CD8-positive, alpha-beta T cell (primary cell): ENCODE measurements at regions of chr3 and their contacts with region 1.

Region 1: DNA sequence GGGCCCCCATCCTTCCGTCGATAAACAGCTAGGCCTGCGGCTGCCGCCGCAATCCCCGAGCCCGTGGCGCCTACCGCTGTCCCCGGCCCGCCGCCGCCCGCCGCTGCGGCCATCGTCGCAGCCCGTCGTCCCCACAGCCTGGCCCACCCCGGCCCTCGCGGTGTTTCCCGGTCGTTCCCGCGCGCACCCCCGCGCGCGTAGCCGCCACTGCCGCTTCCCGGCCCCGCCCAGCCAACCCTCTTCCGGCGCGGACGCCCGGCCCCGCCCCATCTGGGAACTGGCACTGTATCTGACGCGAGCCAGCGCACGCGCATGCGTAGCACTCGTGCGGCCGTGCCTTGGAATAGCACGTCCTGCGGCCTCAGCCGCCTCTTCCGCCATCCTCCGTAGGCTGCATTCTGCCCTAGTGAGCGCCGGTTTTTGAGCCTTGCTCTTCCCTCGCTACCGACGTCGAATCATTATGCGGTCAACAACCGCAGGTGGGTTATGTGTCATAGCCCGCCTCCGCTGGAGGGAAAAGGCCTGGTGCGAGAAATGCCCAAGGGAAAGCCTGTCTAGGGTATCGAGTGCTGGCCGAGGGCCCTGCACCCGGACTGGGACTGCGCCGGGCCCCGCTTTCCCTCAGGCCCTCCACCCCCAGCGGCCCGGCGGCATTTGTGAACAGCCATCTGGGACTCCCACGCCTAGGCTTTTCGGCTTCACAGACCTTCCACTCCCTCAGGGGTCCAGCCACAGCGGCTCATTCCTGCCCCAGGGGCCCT is at the start of gene SMARCC1:
- DNase-seq: peak; percentile 91 to 99 (median 97)
- ATAC-seq: peak; percentile 87
- H3K4me3 ChIP-seq: peak within 1 kb of the TSS; percentile 54 to 91
- H3K4me3 Mint-ChIP-seq: peak within 1 kb of the TSS; percentile 89
- H3K27ac ChIP-seq: peak within 1 kb of the TSS; percentile 87 to 98
- H3K27ac Mint-ChIP-seq: peak within 1 kb of the TSS; percentile 97
- H3K4me1 ChIP-seq: peaks cover 23% of the 10 kb centered on the region
- H3K4me1 Mint-ChIP-seq: peaks cover 31% of the 10 kb centered on the region
- H3K27me3 ChIP-seq: no peaks in the 10 kb centered on the region
- H3K27me3 Mint-ChIP-seq: no peaks in the 10 kb centered on the region
- CTCF ChIP-seq: no peak
- total RNA-seq, gene SMARCC1: 65.4 to 68.2 TPM

Region 2: DNA sequence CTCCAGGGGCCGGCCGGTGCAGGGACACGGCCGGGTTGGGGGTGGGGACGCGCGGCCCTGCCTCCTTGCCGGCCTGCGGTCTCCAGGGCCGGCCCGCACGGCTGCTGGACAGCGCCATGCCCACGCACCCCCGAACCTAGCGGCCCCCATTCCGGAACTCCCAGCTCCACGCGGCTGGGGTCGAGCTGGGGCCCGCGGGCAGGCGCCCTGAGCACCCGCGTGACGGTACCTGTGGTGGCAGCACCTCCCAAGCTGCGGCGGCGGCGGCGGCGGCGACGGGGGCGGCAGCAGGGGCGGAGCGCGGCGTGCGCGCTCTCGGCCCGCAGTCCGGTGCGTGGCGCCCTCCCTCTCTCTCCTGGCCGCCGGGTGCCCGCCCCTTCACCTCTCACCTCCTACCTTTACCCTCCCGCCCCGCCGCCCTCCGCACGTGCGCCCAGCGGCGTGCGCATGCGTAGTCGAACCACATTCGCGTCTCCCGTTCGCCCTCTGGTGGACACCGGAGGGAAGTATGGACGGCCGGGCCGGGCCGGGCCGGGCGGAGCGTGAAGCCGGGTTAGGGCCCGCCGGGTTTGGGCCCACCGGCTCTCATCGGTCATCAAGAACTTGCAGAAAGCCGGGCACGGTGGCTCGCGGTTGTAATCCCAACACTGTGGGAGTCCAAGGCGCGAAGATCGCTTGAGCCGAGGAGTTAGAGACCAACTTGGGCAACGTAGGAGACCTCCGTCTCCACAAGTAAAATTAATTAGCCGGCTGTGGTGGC is 306.1 kb before region 1 on chr3 and contains the start of gene SCAP:
- CTCF ChIA-PET with region 1: no interaction called
- POLR2A ChIA-PET with region 1: interaction called, 4 read pairs
- intact Hi-C with region 1: loop called in 1 of 2 experiments (anchors 2 kb)
- DNase-seq: peak; percentile 90 to 98 (median 96)
- ATAC-seq: peak; percentile 90
- H3K4me3 ChIP-seq: peak within 1 kb of the TSS; percentile 58 to 83
- H3K4me3 Mint-ChIP-seq: peak within 1 kb of the TSS; percentile 93
- H3K27ac ChIP-seq: peak within 1 kb of the TSS; percentile 69 to 86
- H3K27ac Mint-ChIP-seq: peak within 1 kb of the TSS; percentile 94
- H3K4me1 ChIP-seq: peaks cover 28% of the 10 kb centered on the region
- H3K4me1 Mint-ChIP-seq: peaks cover 43% of the 10 kb centered on the region
- H3K27me3 ChIP-seq: no peaks in the 10 kb centered on the region
- H3K27me3 Mint-ChIP-seq: no peaks in the 10 kb centered on the region
- CTCF ChIP-seq: peak; percentile 97
- total RNA-seq, gene SCAP: 72.8 to 76.6 TPM

Region 3: DNA sequence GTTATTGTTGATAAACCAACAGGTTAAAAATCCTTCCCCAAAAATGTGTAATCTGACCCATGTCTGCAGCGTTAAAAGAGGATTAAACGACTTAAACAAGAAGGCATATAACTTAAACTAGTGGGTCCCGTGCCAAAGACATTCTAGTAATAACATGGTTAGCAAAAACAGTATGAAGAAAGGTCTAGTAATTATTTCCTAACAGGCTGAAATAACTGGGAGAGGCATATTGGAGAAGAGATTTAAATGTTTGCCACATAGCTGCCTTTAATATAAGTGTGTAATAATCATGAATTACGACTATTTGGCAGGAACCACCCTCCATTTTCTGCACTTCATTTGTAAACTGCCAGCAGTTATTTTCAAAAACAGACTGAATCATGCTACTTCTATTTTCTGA is 135.5 kb before region 1 on chr3:
- CTCF ChIA-PET with region 1: no interaction called
- POLR2A ChIA-PET with region 1: no interaction called
- intact Hi-C with region 1: no loop called
- DNase-seq: no peak
- ATAC-seq: no peak
- H3K4me3 ChIP-seq: no peak overlapping the region
- H3K4me3 Mint-ChIP-seq: no peak overlapping the region
- H3K27ac ChIP-seq: no peak overlapping the region
- H3K27ac Mint-ChIP-seq: no peak overlapping the region
- H3K4me1 ChIP-seq: no peaks in the 10 kb centered on the region
- H3K4me1 Mint-ChIP-seq: peaks cover 2% of the 10 kb centered on the region
- H3K27me3 ChIP-seq: no peaks in the 10 kb centered on the region
- H3K27me3 Mint-ChIP-seq: no peaks in the 10 kb centered on the region
- CTCF ChIP-seq: no peak

Region 4: DNA sequence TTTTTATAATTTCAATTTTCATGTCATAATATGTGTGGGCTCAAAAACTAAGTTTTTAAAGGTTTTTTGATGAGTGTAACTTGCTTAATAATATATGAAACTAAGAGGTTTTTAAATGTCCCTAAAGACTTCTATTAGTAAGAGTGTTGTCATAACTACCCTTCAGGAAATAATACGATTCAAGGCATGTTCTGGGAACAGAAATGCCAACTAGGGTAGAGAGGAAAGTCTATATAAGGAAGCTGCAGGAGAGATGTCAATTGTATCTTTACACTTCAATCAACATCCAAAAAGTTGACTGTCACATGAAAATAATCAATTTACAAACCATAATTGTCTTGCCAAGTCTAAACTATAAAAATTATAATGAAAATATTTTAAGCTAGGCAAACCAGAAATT is 76.5 kb before region 1 on chr3:
- CTCF ChIA-PET with region 1: no interaction called
- POLR2A ChIA-PET with region 1: no interaction called
- intact Hi-C with region 1: loop called in 1 of 2 experiments (anchors 5 kb)
- DNase-seq: no peak
- ATAC-seq: no peak
- H3K4me3 ChIP-seq: no peak overlapping the region
- H3K4me3 Mint-ChIP-seq: no peak overlapping the region
- H3K27ac ChIP-seq: no peak overlapping the region
- H3K27ac Mint-ChIP-seq: no peak overlapping the region
- H3K4me1 ChIP-seq: no peaks in the 10 kb centered on the region
- H3K4me1 Mint-ChIP-seq: no peaks in the 10 kb centered on the region
- H3K27me3 ChIP-seq: no peaks in the 10 kb centered on the region
- H3K27me3 Mint-ChIP-seq: no peaks in the 10 kb centered on the region
- CTCF ChIP-seq: no peak

Region 5: GRCh38 chr3:47722859-47723258 is 59.0 kb before region 1 on chr3:
- CTCF ChIA-PET with region 1: no interaction called
- POLR2A ChIA-PET with region 1: no interaction called
- intact Hi-C with region 1: loop called in 1 of 2 experiments (anchors 5 kb)
- DNase-seq: no peak
- ATAC-seq: no peak
- H3K4me3 ChIP-seq: no peak overlapping the region
- H3K4me3 Mint-ChIP-seq: no peak overlapping the region
- H3K27ac ChIP-seq: no peak overlapping the region
- H3K27ac Mint-ChIP-seq: peak overlapping the region; percentile 29
- H3K4me1 ChIP-seq: no peaks in the 10 kb centered on the region
- H3K4me1 Mint-ChIP-seq: peaks cover 4% of the 10 kb centered on the region
- H3K27me3 ChIP-seq: no peaks in the 10 kb centered on the region
- H3K27me3 Mint-ChIP-seq: no peaks in the 10 kb centered on the region
- CTCF ChIP-seq: no peak

Region 6: DNA sequence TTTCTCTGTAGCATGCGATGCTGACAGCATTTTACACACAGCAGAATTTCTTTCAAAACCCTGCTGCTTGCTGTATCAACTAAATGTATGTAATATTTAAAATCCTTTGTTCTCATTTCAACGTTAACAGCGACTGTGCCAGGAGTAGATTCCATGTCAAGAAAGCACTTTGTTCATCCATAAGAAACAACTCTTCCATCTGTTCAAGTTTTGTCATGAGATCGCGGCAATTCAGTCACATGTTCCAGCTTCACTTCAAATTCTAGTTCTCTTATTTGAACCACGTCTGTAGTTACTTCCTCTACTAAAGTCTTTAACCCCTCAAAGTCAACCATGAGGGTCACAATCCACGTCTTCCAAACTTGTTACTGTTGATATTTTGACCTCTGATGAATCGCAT is 50.8 kb before region 1 on chr3:
- CTCF ChIA-PET with region 1: interaction called, 3 read pairs
- POLR2A ChIA-PET with region 1: no interaction called
- intact Hi-C with region 1: loop called in 1 of 2 experiments (anchors 10 kb)
- DNase-seq: no peak
- ATAC-seq: no peak
- H3K4me3 ChIP-seq: no peak overlapping the region
- H3K4me3 Mint-ChIP-seq: no peak overlapping the region
- H3K27ac ChIP-seq: no peak overlapping the region
- H3K27ac Mint-ChIP-seq: no peak overlapping the region
- H3K4me1 ChIP-seq: no peaks in the 10 kb centered on the region
- H3K4me1 Mint-ChIP-seq: no peaks in the 10 kb centered on the region
- H3K27me3 ChIP-seq: no peaks in the 10 kb centered on the region
- H3K27me3 Mint-ChIP-seq: no peaks in the 10 kb centered on the region
- CTCF ChIP-seq: no peak

Region 7: GRCh38 chr3:48088749-48089466 is 307.0 kb after region 1 on chr3:
- CTCF ChIA-PET with region 1: no interaction called
- POLR2A ChIA-PET with region 1: no interaction called
- intact Hi-C with region 1: loop called in 1 of 2 experiments (anchors 5 kb)
- DNase-seq: peak; percentile 89 to 97 (median 94)
- ATAC-seq: peak; percentile 91
- H3K4me3 ChIP-seq: peak overlapping the region; percentile 80 to 100
- H3K4me3 Mint-ChIP-seq: peak overlapping the region; percentile 96
- H3K27ac ChIP-seq: peak overlapping the region; percentile 86 to 95
- H3K27ac Mint-ChIP-seq: peak overlapping the region; percentile 98
- H3K4me1 ChIP-seq: peaks cover 18% of the 10 kb centered on the region
- H3K4me1 Mint-ChIP-seq: peaks cover 33% of the 10 kb centered on the region
- H3K27me3 ChIP-seq: no peaks in the 10 kb centered on the region
- H3K27me3 Mint-ChIP-seq: no peaks in the 10 kb centered on the region
- CTCF ChIP-seq: no peak

Region 8: DNA sequence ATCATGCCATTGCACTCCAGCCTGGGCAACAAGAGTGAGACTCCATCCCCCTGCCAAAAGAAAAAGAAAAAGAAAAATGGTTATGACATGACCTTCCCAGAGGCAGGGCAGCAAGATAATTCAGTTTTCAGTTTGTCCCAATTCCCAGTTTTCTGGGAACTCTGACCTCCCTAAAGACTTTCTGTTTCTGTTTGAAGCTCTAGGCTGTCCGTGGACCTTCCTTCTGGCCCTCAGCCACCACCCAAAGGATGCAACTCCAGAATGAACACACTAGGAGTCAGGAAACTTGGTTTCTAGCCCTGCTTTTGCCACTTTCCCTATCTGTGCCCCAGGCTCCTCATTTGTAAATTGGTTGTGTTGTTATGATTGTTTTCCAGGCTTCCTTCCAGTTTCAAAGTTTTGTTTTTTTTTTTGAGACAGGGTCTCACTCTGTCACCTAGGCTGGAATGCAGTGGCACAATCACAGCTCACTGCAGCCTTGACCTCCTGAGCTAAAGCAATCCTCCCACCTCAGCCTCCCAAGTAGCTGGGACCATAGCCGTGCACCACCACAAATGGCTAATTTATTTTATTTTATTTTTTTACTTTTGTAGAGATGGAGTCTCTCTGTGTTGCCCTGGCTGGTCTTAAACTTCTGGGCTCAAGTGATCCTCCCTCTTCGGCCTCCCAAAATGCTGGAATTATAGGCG is 337.8 kb after region 1 on chr3:
- CTCF ChIA-PET with region 1: no interaction called
- POLR2A ChIA-PET with region 1: no interaction called
- intact Hi-C with region 1: no loop called
- DNase-seq: no peak
- ATAC-seq: no peak
- H3K4me3 ChIP-seq: no peak overlapping the region
- H3K4me3 Mint-ChIP-seq: no peak overlapping the region
- H3K27ac ChIP-seq: no peak overlapping the region
- H3K27ac Mint-ChIP-seq: no peak overlapping the region
- H3K4me1 ChIP-seq: no peaks in the 10 kb centered on the region
- H3K4me1 Mint-ChIP-seq: no peaks in the 10 kb centered on the region
- H3K27me3 ChIP-seq: no peaks in the 10 kb centered on the region
- H3K27me3 Mint-ChIP-seq: no peaks in the 10 kb centered on the region
- CTCF ChIP-seq: no peak